Common myeloid progenitor, CD34-positive (primary cell): ENCODE measurements at regions of chr14 and their contacts with region 1.

Region 1: DNA sequence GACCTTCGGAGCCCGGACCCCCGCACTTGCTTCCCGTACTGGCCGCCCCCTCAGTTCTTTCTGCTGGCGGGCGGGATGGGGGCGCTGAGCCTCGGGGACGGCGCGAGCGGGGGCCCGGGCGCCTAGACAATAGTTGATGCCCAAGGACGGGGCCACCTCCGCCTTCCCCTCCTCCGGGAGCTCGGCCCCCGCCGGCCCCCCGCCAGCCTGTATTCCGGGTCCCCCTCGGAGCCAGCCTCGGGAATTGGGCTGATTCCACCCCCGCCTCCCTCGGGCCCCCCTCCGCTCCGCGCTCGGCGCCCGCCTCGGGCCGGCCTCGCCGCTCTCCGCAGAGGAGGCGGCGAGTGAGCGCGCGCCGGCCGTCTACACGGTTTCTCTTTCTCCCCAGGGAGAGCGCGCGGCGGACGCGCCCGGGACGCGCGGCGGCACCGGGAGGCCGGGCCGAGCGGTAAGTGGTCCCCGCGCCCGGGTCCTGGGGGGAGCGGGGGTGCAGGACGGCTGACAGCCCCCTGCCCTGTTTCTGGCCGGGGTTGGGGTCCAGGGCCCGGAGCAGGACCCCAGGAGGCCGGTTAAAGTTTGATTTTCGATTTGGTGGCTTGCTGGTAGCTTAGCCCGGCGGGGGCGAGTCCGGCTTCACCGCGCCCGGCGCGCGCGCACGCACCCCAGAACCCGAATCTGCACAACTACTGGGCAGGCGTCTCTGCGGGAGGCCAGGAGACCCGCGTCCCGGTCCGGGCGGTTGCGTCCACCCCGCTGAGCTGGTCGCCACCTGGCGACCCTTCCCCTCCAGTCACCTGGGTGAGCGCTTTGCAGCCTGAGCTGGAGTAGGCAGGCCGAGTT is 413.7 kb downstream of the PCNX1 start:
- DNase-seq: peak in 2 of 3 donors; percentile 60 to 66
- H3K4me3 ChIP-seq: peak overlapping the region; percentile 78 to 94 (median 90)
- H3K27ac ChIP-seq: peak overlapping the region; percentile 40 to 79
- H3K4me1 ChIP-seq: peaks cover 15 to 32% (median 25%) of the 10 kb centered on the region in 4 experiments
- H3K27me3 ChIP-seq: peaks cover 0 to 3% (median 0%) of the 10 kb centered on the region in 5 experiments

Region 2: DNA sequence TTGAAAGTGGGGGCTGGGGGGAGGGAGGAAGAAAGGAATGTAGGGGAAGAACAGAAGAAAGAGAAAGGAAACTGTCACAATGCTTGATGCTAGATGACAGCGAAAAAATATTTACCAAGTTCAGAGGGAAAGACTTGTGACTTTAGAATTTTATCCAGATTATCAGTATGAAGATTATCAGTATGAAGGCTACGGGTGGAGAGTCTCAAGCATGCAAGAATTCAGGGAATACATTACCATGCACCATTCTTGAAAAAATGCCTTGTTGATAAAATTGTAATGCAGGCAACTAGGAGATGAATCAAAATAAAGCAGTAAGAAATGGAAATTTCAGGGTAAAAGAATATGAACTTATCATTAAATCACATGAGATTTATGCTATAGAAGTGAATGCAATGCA is 36.9 kb before region 1 on chr14:
- CTCF ChIA-PET with region 1: no interaction called
- POLR2A ChIA-PET with region 1: no interaction called
- DNase-seq: no peak
- H3K4me3 ChIP-seq: no peak overlapping the region
- H3K27ac ChIP-seq: no peak overlapping the region
- H3K4me1 ChIP-seq: no peaks in the 10 kb centered on the region
- H3K27me3 ChIP-seq: no peaks in the 10 kb centered on the region

Region 3: GRCh38 chr14:71403656-71404055 is 82.7 kb after region 1 on chr14:
- CTCF ChIA-PET with region 1: interaction called, 36 read pairs
- POLR2A ChIA-PET with region 1: interaction called, 3 read pairs
- DNase-seq: peak; percentile 58 to 83 (median 77)
- H3K4me3 ChIP-seq: no peak overlapping the region
- H3K27ac ChIP-seq: no peak overlapping the region
- H3K4me1 ChIP-seq: peaks cover 7 to 24% (median 17%) of the 10 kb centered on the region in 4 experiments
- H3K27me3 ChIP-seq: no peaks in the 10 kb centered on the region